ENCODE measurements at regions of chr10 and their contacts with region 1.

Region 1: GRCh38 chr10:96374985-96375830 is 16.4 kb upstream of the OPALIN start:
- DNase-seq: peak; percentile 90
- H3K4me3 ChIP-seq: peak overlapping the region in 2 of 3 experiments; percentile 47 to 48
- H3K27ac ChIP-seq: no peak overlapping the region
- H3K4me1 ChIP-seq: no peaks in the 10 kb centered on the region
- H3K27me3 ChIP-seq: peaks cover 0 to 2% of the 10 kb centered on the region in 2 experiments
- CTCF ChIP-seq: peak; percentile 96 to 98
- POLR2A ChIP-seq: no peak

Region 2: DNA sequence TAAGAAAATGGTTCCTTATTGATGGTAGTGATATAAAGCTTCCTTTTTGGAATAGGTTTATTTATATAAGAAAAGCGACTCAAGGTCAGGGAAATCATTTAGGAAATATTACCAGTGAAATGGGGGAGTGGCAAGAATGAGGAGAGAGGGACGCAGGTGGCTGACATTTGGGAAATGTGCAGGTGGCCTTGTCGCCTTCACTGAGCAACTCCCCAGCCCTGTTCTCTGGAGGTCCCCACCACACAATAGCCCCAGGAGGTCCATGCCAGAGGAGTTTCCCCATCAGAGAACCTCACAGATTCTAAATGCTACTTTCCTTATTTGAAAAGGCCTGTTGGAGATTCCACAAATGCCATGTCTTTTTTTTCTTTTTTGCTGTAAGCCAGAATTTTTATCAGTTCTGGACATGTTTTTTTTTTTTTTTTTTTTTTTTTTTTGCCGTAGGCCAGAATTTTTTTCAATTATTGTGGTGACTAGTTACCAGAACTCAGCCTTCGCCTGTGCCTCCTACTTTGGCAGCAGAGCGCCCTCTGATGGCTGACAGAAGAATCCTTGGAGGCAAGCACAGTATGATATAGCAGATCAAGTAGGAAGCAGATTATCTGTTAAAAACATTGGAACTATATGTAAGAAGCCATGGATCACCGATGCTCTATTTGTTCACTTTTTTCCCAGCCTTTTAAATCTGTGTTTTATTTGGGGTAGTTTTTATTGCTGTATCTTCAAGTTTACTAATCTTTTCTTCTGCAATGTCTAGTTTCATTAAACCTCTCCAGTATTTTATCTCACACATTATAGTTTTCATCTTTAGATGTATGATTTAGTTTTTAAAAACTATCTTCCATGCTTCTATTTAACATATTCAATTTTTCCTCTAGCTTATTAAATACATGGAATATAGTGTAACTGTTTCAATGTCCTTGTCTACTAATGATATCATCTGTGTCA is 35.0 kb before region 1 on chr10:
- CTCF ChIA-PET with region 1: interaction called, 10 read pairs
- POLR2A ChIA-PET with region 1: no interaction called
- dilution Hi-C with region 1: no loop called
- intact Hi-C with region 1: loop called (anchors 1 kb)
- DNase-seq: peak; percentile 53
- H3K4me3 ChIP-seq: no peak overlapping the region
- H3K27ac ChIP-seq: no peak overlapping the region
- H3K4me1 ChIP-seq: no peaks in the 10 kb centered on the region
- H3K27me3 ChIP-seq: peaks cover 3 to 4% of the 10 kb centered on the region in 2 experiments
- CTCF ChIP-seq: peak; percentile 77 to 79
- POLR2A ChIP-seq: no peak

Region 3: DNA sequence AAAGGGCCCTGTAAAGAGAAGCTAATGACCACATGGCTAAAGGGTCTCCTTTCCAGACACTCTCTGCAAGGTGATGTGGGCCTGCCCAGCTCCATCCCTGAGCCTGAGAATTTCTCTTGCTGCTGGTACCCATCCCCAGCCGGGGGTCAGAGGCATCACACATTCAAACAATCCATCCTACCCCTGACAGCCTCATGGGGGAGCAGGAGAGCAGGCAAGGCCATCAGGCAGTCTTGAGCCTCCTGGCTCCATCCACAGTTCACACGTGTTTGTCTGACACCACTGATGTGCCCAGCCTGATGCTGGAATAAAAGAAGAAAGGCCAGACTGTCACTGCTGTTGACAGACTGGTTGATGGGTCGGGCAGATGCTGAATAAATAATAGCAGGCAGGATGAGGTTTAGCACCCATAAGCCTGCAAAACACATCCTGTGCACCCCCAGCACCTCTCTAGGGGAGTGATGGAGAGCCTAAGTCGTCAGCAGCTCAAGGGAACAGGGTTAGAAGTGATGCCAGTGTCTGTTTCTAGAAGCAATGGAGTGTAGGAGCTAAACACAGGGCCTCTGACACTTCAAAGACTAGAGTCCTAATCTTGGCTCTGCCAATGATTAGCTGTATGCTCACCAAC is 95.0 kb after region 1 on chr10:
- CTCF ChIA-PET with region 1: no interaction called
- POLR2A ChIA-PET with region 1: no interaction called
- dilution Hi-C with region 1: no loop called
- intact Hi-C with region 1: no loop called
- DNase-seq: peak; percentile 36
- H3K4me3 ChIP-seq: no peak overlapping the region
- H3K27ac ChIP-seq: no peak overlapping the region
- H3K4me1 ChIP-seq: no peaks in the 10 kb centered on the region
- H3K27me3 ChIP-seq: peaks cover 0 to 6% of the 10 kb centered on the region in 2 experiments
- CTCF ChIP-seq: peak; percentile 40 to 70
- POLR2A ChIP-seq: no peak

Region 4: GRCh38 chr10:96556003-96556402 is 180.8 kb after region 1 on chr10:
- CTCF ChIA-PET with region 1: interaction called, 13 read pairs
- POLR2A ChIA-PET with region 1: no interaction called
- dilution Hi-C with region 1: no loop called
- intact Hi-C with region 1: loop called (anchors 2 kb)
- DNase-seq: peak; percentile 24
- H3K4me3 ChIP-seq: no peak overlapping the region
- H3K27ac ChIP-seq: no peak overlapping the region
- H3K4me1 ChIP-seq: no peaks in the 10 kb centered on the region
- H3K27me3 ChIP-seq: no peaks in the 10 kb centered on the region
- CTCF ChIP-seq: peak; percentile 10 to 20
- POLR2A ChIP-seq: no peak

Region 5: GRCh38 chr10:96642973-96643372 is 267.8 kb after region 1 on chr10:
- CTCF ChIA-PET with region 1: interaction called, 4 read pairs
- POLR2A ChIA-PET with region 1: no interaction called
- dilution Hi-C with region 1: no loop called
- intact Hi-C with region 1: loop called (anchors 5 kb)
- DNase-seq: no peak
- H3K4me3 ChIP-seq: no peak overlapping the region
- H3K27ac ChIP-seq: no peak overlapping the region
- H3K4me1 ChIP-seq: no peaks in the 10 kb centered on the region
- H3K27me3 ChIP-seq: peaks cover 0 to 6% of the 10 kb centered on the region in 2 experiments
- CTCF ChIP-seq: peak; percentile 12 to 24
- POLR2A ChIP-seq: no peak

Measured in endothelial cell of umbilical vein (primary cell).